AG04449 (cell line): ENCODE measurements at regions of chr1 and their contacts with region 1.

Region 1: GRCh38 chr1:160006312-160006940 is 25.4 kb downstream of the PIGM start:
- DNase-seq: no peak
- H3K4me3 ChIP-seq: no peak overlapping the region
- CTCF ChIP-seq: peak; percentile 94

Region 2: DNA sequence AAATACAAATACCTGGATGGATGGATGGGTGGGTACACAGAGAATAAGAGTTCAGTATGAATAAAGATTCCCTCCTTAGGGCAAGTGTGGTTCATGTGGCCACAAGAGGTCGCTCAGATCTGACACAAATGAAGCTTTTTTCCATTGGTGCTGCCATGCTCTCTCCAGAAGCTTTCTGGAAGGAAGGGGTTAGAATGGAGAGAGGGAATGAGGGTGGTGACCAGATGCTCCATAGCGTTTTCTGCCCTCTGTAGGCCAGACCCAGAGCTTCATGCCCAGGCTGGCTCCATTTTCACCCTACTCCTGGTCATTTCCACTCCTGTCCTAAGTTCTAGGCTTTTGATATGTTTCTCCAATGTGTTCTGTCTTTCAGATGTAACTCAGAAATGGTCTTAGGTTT is 207.5 kb before region 1 on chr1:
- CTCF ChIA-PET with region 1: interaction called, 115 read pairs
- POLR2A ChIA-PET with region 1: no interaction called
- DNase-seq: no peak
- H3K4me3 ChIP-seq: no peak overlapping the region
- CTCF ChIP-seq: peak; percentile 55

Region 3: DNA sequence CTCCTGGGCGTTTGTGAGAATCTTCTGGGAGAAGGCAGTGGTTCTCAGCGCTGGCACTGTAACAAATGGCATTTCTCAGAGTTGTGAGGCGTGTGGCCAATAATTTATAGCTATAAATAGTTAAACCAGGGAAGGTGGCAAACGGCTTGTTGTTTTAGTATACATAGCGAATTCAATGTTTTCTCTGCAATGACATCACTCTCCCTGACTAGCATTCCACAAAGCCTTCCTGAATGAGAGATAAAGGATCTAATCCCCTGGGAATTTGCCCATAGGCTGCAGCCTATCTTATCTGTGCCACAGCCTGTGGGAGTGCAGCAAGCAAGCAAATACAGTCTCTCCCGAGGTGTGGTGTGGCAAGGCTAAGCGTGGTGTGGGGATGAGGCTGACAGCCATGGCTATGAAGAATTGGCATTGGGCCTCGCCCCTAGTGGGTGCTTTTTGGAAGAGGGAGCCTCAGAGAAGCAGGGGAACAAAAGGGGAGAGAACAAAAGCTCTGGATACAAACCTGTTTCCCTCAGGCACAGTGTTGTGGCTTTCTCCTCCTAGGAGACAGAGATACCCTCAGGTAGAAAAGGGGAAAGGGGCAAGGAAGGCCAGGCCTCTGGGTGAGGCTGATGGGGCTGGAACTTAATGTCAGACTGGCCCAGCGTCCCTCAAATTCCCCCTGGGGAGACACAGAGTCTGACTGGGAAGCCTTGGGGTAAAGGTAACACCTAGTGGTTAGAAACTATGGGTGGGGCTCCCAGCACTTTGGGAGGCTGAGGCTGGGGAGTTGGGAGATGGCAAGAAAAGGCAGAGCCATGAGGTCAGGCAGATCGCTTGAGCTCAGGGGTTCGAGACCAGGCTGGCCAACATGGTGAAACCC is 90.0 kb before region 1 on chr1:
- CTCF ChIA-PET with region 1: interaction called, 1,031 read pairs
- POLR2A ChIA-PET with region 1: interaction called, 5 read pairs
- DNase-seq: peak; percentile 92
- H3K4me3 ChIP-seq: no peak overlapping the region
- CTCF ChIP-seq: no peak

Region 4: DNA sequence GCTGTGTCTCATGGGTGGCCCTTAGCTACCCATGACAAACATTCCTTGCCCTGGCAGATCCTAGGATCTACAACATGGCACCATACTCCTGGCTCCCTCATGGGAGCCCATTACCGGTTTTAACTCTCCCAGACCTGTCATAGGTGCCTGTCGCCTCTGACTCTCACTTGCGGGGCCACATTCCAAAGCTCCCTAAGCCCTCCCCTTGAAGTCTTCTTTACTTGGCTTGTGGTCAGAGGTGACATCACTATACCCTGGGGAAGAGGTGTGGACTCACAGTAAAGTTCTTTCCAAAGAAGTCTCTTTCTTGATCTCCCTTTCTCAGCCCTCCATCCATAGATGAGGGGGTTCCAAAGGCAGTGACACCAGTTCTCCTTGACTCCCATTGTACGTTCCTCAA is 47.0 kb before region 1 on chr1:
- CTCF ChIA-PET with region 1: interaction called, 220 read pairs
- POLR2A ChIA-PET with region 1: no interaction called
- DNase-seq: no peak
- H3K4me3 ChIP-seq: no peak overlapping the region
- CTCF ChIP-seq: no peak

Region 5: DNA sequence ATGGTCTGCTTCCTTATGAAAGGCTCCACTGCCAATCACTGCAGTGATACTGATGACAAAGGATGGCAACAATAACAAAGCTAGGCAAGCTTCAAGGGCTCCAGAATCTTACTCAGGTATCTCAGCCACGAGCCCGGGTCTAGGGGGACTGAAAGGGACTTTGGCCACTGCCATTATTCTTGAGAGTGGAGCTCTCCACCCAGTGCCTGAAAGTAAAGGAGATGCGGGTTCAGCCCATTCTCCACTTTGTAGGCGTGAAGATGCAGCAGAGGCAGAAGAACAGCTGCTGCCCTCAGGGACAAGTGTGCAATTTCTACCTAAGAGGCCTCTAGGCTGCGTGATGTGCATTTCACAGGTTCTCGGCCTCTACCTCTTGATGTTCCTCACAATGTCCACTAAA is 21.0 kb before region 1 on chr1:
- CTCF ChIA-PET with region 1: interaction called, 164 read pairs
- POLR2A ChIA-PET with region 1: interaction called, 3 read pairs
- DNase-seq: no peak
- H3K4me3 ChIP-seq: no peak overlapping the region
- CTCF ChIP-seq: no peak

Region 6: DNA sequence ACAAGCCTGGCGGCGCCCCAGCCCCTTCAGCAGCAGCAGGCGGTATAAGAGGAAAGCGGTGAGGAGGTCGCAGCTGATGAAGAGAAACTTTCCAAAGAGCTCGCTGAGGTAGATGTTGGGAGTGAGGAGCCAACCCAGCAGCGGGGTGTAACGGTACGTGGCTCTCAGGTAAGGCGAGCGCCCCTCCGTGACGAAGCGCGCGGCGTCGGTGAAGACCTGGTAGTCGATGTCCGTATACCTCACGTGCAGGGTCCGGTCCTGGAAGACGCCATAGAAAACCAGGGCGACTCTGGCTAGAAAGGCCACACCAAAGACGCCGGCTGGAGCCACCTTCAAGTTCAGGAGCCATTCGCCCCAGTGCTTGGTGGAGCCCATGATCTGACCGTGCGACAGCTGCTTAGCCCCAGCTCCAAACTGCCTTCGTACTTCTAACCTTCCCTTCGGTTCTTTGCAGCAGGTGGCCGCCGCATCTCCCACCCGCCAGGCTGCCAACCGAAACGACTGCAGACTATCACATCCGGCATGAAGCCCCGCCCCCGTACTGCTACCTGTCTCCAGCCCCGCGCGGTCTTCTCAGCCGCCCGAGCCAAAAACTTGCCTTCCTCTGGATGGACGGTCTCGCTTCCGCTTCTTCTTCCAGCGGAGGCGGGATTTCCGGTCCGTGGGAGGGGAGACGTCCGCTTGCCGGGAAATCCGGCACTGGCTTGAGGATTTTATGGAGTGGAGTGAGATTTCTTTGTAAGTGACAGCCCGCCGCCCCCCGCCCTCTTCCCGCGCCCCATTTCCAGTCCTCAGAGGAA is 25.1 kb after region 1 on chr1 and contains the start of gene PIGM:
- CTCF ChIA-PET with region 1: interaction called, 21 read pairs
- POLR2A ChIA-PET with region 1: no interaction called
- DNase-seq: peak; percentile 38
- H3K4me3 ChIP-seq: peak within 1 kb of the TSS; percentile 88
- CTCF ChIP-seq: no peak

Region 7: GRCh38 chr1:160108888-160109662 is 102.6 kb after region 1 on chr1:
- CTCF ChIA-PET with region 1: no interaction called
- POLR2A ChIA-PET with region 1: no interaction called
- DNase-seq: no peak
- H3K4me3 ChIP-seq: no peak overlapping the region
- CTCF ChIP-seq: peak; percentile 35